ENCODE measurements at regions of chr10 and their contacts with region 1.

Region 1: GRCh38 chr10:31031558-31032257 is at the start of gene ZNF438:
- DNase-seq: peak; percentile 87 to 97 (median 93)
- H3K4me3 ChIP-seq: peak within 1 kb of the TSS; percentile 53 to 98 (median 82)
- H3K27ac ChIP-seq: peak within 1 kb of the TSS; percentile 84 to 100 (median 98)
- H3K27me3 ChIP-seq: no peaks in the 10 kb centered on the region
- CTCF ChIP-seq: peak; percentile 14 to 79 (median 66)
- total RNA-seq, gene ZNF438: 6.7 to 14.1 (median 10.0) TPM

Region 2: GRCh38 chr10:30751678-30752331 is 279.9 kb before region 1 on chr10:
- intact Hi-C with region 1: loop called in 1 of 2 experiments (anchors 10 kb)
- DNase-seq: peak; percentile 14 to 92 (median 81)
- H3K4me3 ChIP-seq: peak overlapping the region in 9 of 59 donors; percentile 4 to 38 (median 11)
- H3K27ac ChIP-seq: peak overlapping the region; percentile 10 to 95 (median 82)
- H3K27me3 ChIP-seq: no peaks in the 10 kb centered on the region
- CTCF ChIP-seq: peak; percentile 51 to 99 (median 89)

Region 3: GRCh38 chr10:31133628-31134302 is 102.1 kb after region 1 on chr10:
- intact Hi-C with region 1: loop called (anchors 5 kb)
- DNase-seq: peak; percentile 73 to 86 (median 78)
- H3K4me3 ChIP-seq: peak overlapping the region; percentile 43 to 74 (median 62)
- H3K27ac ChIP-seq: peak overlapping the region; percentile 78 to 98 (median 93)
- H3K27me3 ChIP-seq: no peaks in the 10 kb centered on the region
- CTCF ChIP-seq: peak in 7 of 56 donors; percentile 2 to 34 (median 16)

Region 4: GRCh38 chr10:31318854-31319601 is 287.3 kb after region 1 on chr10 and contains the start of gene ZEB1:
- intact Hi-C with region 1: loop called in 1 of 2 experiments (anchors 10 kb)
- DNase-seq: peak; percentile 24 to 85 (median 60)
- H3K4me3 ChIP-seq: peak within 1 kb of the TSS; percentile 53 to 94 (median 81)
- H3K27ac ChIP-seq: peak within 1 kb of the TSS in 58 of 59 donors; percentile 48 to 96 (median 90)
- H3K27me3 ChIP-seq: peaks cover 0 to 39% (median 5%) of the 10 kb centered on the region in 45 donors
- CTCF ChIP-seq: peak in 34 of 56 donors; percentile 11 to 47 (median 30)
- total RNA-seq, gene ZEB1: 53.6 to 139 (median 89.0) TPM

Region 5: GRCh38 chr10:31759799-31760626 is 728.3 kb after region 1 on chr10:
- intact Hi-C with region 1: loop called in 1 of 2 experiments (anchors 2 kb)
- DNase-seq: peak; percentile 92 to 99 (median 97)
- H3K4me3 ChIP-seq: peak overlapping the region; percentile 71 to 99 (median 90)
- H3K27ac ChIP-seq: peak overlapping the region; percentile 72 to 98 (median 94)
- H3K27me3 ChIP-seq: no peaks in the 10 kb centered on the region
- CTCF ChIP-seq: peak in 6 of 56 donors; percentile 9 to 33 (median 18)

Measured in dorsolateral prefrontal cortex (tissue), 120 donors.